Testis (tissue), 5 donors: ENCODE measurements at regions of chr10 and their contacts with region 1.

Region 1: DNA sequence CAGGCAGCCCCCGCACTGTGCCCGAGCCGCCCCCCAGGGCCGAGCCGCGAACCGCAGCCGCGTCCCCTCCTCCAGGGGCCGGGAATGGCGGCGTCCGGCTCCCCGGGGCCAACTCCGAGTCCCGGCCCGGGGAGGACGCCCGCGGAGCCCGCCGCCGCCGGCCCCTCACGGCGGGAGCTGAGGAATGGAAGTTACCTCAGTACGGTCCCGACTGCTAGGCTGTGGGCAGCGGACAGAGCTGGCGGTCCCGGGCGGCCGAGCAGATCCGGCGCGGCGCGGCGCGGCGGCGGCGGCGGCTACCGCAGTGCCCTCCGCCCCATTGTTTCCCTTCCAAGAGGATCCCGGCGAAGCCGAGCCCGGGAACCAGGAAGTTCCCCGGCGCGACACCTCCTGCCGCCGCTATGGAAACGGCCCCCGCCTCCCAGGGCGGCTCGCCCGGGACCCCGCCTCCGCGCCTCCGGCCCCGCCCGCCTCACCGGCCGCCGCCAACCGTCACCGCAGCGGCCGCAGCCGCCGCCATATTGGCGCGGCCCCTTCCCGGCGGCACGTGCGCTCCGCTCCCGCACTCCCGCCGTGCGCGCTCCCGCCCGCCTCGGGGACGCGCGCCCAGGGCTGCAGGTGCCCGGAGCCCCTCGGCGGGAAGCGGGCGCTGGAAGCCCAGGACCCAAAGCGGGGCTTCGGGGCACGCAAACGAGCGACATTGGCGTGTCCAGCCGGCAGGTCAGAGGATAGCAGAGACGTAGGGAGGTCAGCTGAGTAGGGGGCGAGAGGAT is at the start of gene USP6NL:
- DNase-seq: peak; percentile 92
- H3K4me3 ChIP-seq: peak within 1 kb of the TSS; percentile 73 to 98
- H3K27ac ChIP-seq: peak within 1 kb of the TSS; percentile 84 to 96
- H3K4me1 ChIP-seq: peaks cover 12% of the 10 kb centered on the region
- H3K27me3 ChIP-seq: no peaks in the 10 kb centered on the region
- CTCF ChIP-seq: no peak
- POLR2A ChIP-seq: no peak
- total RNA-seq, gene USP6NL: 50.4 to 56.1 TPM

Region 2: DNA sequence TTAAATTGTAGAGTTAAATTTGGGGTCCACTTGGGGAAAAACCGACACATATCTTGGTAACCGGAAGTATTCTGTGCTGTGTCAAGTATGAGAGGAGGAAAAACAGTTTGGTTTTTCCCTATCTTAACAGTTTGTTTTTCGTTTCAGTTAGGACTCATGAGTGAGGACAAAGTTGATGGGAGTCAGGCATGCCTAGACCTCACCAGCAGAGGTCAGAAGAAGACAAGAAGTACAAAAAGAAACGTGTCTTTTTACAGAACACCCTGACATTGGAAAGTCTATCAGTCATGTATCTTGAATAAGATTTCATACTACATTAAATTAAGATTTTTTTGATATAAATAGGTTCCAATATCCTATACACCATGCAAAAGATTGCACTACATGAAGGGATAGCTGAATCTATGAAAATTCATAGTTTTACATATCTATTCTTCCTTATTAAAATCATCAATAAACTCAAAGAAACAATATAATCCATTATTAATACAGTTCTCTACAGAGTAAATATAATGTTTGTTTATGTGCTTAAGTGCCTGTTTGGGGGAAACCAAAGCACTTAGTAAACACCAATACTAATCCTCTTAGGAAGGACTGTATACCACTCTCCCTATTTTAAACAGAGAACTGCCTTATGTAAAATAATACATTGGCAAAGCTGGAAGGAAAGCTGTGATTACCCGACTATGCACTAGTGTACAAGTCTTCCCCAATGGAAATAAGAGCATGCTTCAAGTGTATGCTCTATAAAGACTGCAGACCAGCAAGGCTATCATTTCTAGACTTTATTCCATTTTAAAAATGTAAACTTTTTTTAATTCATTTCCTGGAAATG is 95.6 kb before region 1 on chr10:
- intact Hi-C with region 1: no loop called
- DNase-seq: peak; percentile 73
- H3K4me3 ChIP-seq: no peak overlapping the region
- H3K27ac ChIP-seq: no peak overlapping the region
- H3K4me1 ChIP-seq: peaks cover 12% of the 10 kb centered on the region
- H3K27me3 ChIP-seq: no peaks in the 10 kb centered on the region
- CTCF ChIP-seq: peak; percentile 66 to 79 (median 77)
- POLR2A ChIP-seq: no peak

Region 3: DNA sequence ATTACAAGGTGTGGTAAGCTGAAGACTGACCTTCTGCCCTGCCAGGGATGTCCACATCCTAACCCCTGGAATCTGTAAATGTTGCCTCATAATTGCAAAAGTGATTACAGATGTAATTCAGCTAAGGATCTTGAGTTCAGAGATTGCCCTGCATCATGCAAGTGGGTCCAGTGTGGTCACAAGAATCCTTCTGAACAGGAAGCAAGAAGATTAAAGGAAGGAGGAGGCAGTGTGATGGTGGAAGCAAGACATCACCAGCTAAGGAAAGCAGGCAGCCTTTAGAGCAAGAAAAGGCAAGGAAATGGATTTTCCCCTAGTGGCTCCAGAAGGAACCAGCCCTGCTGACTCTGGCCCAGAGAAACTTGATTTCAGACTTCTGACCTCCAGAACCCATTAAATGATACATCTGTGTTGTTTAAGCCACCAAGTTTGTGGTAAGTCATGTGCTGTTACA is 78.1 kb before region 1 on chr10:
- intact Hi-C with region 1: loop called (anchors 10 kb)
- DNase-seq: no peak
- H3K4me3 ChIP-seq: no peak overlapping the region
- H3K27ac ChIP-seq: peak overlapping the region in 1 of 2 donors; percentile 64
- H3K4me1 ChIP-seq: peaks cover 5% of the 10 kb centered on the region
- H3K27me3 ChIP-seq: no peaks in the 10 kb centered on the region
- CTCF ChIP-seq: peak in 2 of 3 experiments; percentile 28 to 48
- POLR2A ChIP-seq: no peak

Region 4: DNA sequence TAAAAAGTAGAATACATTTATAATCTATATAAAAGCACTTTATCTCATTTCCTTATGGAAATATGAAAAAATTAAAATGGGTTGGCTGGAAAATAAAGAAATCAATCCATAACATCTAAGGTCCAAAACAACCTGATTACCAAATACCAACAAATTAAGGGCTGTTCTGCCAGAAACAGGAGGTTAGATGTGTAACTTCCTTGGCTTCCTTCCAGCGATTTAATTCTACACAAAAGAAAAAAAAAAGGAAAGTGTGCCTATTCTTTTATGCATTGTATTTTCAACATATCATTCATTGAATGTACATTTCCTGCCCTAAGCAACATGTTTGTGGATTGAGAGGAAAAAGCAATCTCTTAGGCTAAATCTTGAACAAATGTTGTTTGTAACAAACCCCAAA is 36.2 kb after region 1 on chr10:
- intact Hi-C with region 1: no loop called
- DNase-seq: no peak
- H3K4me3 ChIP-seq: no peak overlapping the region
- H3K27ac ChIP-seq: no peak overlapping the region
- H3K4me1 ChIP-seq: no peaks in the 10 kb centered on the region
- H3K27me3 ChIP-seq: no peaks in the 10 kb centered on the region
- CTCF ChIP-seq: no peak
- POLR2A ChIP-seq: no peak